Right ventricle myocardium superior (tissue), 1 donor: ENCODE measurements at regions of chr10 and their contacts with region 1.

Region 1: DNA sequence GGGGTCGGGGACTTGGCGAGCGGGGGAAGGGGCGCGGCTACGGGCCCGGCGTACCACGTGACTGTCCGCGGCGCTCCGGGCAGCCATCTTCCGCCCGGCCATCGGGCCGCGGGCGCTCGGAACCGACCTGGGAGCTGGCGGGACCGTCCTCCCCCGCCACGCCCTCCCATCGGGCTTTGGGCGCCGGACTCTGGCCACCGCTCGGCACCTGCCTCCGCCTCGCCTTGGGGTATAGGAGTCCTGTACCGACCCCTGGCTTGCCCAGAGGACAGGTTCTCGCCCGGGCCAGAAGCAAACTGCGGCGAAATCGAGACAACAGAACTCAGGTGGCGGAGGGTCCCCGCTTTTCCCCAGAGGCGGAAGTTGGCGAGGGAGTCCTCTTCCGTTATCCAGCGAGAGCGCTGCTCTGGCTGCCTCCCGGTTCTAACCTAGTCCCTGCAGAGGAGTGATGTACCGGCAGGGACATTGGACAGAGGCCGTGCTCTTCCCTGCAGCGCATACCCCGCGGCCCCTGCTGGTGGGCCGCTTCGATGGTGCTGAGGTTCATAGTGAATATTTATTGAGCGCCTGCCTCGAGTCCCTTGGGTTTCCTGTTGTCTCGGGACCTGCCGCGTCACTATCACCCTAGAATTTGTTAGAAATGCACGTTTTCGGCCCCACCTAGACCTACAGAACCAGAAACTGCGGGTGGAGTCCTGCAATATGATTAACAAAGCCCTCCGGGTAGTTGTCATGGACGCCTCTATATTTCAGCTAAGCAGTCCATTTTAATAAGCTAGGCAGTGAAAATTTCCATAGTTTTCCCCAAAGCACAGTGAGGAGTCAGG is 1.3 kb upstream of the SGMS1 start:
- DNase-seq: peak; percentile 90
- ATAC-seq: peak; percentile 81

Region 2: DNA sequence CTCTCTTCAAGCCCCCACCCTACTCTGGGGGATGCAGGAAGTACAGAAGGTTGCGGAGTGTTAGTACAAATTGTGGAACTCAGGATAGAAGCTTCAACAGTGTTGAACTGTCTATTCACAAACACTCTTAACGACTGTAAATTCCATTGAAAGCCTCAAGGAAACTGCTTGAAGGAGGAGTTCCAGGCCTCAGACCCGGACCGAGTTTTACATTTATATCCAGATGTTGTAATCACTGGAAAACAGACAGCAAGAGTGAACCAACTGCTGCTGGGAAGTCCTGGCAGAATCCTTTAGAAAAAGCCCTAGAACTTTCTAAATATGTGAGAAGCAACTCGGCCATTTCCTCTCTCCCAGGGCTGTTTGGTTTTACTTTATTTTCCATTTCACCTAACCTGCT is 1601.3 kb before region 1 on chr10:
- intact Hi-C with region 1: no loop called
- DNase-seq: no peak
- ATAC-seq: peak; percentile 78

Region 3: DNA sequence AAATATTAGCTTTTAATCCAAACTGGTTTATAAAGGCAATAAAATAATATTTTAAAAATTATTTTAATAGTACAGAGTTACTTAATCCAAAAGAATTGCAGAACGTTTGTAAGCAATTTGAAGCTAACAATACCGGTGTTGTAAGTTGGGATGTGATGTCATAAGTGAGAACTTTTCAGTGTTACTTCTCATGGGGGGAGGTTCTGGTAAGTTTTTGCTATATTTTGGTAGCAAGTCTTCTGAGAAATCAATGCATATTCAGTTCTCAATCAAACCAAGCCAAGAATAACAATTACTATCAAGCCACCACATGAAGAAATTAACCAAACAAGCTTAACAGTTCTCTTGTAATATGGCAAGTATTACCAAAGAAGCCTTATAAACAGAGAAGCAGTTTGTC is 226.7 kb before region 1 on chr10:
- intact Hi-C with region 1: no loop called
- DNase-seq: no peak
- ATAC-seq: peak; percentile 60

Region 4: GRCh38 chr10:50421026-50421719 is 203.9 kb before region 1 on chr10:
- intact Hi-C with region 1: loop called (anchors 2 kb)
- DNase-seq: no peak
- ATAC-seq: peak; percentile 48

Region 5: GRCh38 chr10:50508315-50509051 is 116.6 kb before region 1 on chr10:
- intact Hi-C with region 1: loop called (anchors 10 kb)
- DNase-seq: no peak
- ATAC-seq: no peak

Region 6: GRCh38 chr10:50554995-50555568 is 70.0 kb before region 1 on chr10:
- intact Hi-C with region 1: loop called (anchors 5 kb)
- DNase-seq: no peak
- ATAC-seq: peak; percentile 71